CD4-positive, alpha-beta memory T cell (primary cell): ENCODE measurements at regions of chr19 and their contacts with region 1.

Region 1: GRCh38 chr19:54357381-54357780 is 7.3 kb downstream of the LAIR1 start:
- DNase-seq: no peak
- H3K4me3 ChIP-seq: no peak overlapping the region
- H3K4me3 Mint-ChIP-seq: no peak overlapping the region
- H3K27ac ChIP-seq: no peak overlapping the region
- H3K27ac Mint-ChIP-seq: peak overlapping the region in 1 of 7 donors; percentile 10
- H3K4me1 ChIP-seq: peaks cover 20% of the 10 kb centered on the region
- H3K4me1 Mint-ChIP-seq: peaks cover 16 to 36% (median 23%) of the 10 kb centered on the region in 4 donors
- H3K27me3 ChIP-seq: no peaks in the 10 kb centered on the region
- H3K27me3 Mint-ChIP-seq: no peaks in the 10 kb centered on the region

Region 2: DNA sequence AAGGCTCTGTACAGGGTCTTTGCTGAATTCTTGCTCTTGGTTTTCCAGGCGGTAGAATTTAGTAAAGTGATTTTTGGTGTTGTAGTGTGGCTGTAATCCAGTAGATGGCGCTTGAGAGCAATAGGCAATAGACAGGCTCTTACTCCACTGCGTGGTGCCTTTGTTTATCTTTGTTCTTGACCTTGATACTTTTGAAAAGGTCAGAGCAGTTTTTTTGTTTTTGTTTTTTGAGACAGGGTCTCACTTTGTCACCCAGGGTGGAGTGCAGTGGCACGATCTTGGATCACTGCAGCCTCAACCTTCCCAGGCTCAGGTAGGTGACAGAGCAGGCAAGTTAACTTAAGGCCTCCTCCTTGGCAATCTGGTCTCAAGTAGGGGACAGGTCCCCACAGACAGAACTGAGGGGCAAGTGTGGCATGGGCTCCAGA is 32.2 kb before region 1 on chr19:
- CTCF ChIA-PET with region 1: interaction called, 15 read pairs
- POLR2A ChIA-PET with region 1: no interaction called
- intact Hi-C with region 1: loop called (anchors 1 kb)
- DNase-seq: peak; percentile 59 to 68 (median 64)
- H3K4me3 ChIP-seq: no peak overlapping the region
- H3K4me3 Mint-ChIP-seq: no peak overlapping the region
- H3K27ac ChIP-seq: no peak overlapping the region
- H3K27ac Mint-ChIP-seq: peak overlapping the region in 2 of 7 donors; percentile 0 to 58
- H3K4me1 ChIP-seq: peaks cover 8% of the 10 kb centered on the region
- H3K4me1 Mint-ChIP-seq: peaks cover 8 to 19% (median 14%) of the 10 kb centered on the region in 4 donors
- H3K27me3 ChIP-seq: no peaks in the 10 kb centered on the region
- H3K27me3 Mint-ChIP-seq: peaks cover 11 to 13% of the 10 kb centered on the region in 2 donors

Region 3: DNA sequence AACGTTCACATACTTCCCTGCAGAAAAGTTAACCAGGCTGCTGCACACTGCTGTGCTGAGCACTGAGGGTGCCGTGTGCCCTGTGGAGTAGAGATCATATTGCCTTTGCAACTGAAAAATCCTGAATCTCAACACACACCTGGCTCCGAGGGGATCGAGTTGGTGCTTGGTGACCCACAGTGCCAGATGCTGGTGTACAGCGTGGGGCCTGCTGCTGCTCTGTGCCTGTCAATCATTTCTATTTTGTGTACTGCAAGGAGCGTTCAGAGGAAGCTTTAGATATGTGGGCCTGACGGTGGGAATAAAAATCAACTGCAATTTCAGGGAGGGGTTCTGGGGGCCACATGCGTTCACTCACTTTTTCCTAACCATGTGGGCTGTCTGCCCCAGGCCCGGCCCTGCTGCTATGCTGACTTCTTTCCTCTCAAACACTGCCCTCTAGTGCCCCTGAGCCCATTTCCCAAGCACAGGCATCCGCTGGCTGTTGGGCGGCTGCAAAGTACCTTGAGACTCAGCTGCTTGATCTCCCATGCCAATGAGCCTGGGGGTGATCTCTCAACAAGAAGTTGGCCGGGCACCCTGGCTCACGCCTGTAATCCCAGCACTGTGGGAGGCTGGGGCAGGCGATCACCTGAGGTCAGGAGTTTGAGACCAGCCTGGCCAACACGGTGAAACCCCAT is 81.9 kb after region 1 on chr19:
- CTCF ChIA-PET with region 1: no interaction called
- POLR2A ChIA-PET with region 1: no interaction called
- intact Hi-C with region 1: no loop called
- DNase-seq: no peak
- H3K4me3 ChIP-seq: no peak overlapping the region
- H3K4me3 Mint-ChIP-seq: no peak overlapping the region
- H3K27ac ChIP-seq: no peak overlapping the region
- H3K27ac Mint-ChIP-seq: peak overlapping the region in 2 of 7 donors; percentile 44 to 60
- H3K4me1 ChIP-seq: no peaks in the 10 kb centered on the region
- H3K4me1 Mint-ChIP-seq: peaks cover 9 to 33% (median 16%) of the 10 kb centered on the region in 4 donors
- H3K27me3 ChIP-seq: no peaks in the 10 kb centered on the region
- H3K27me3 Mint-ChIP-seq: no peaks in the 10 kb centered on the region